Thyroid gland (tissue), 4 donors: ENCODE measurements at regions of chr2 and their contacts with region 1.

Region 1: DNA sequence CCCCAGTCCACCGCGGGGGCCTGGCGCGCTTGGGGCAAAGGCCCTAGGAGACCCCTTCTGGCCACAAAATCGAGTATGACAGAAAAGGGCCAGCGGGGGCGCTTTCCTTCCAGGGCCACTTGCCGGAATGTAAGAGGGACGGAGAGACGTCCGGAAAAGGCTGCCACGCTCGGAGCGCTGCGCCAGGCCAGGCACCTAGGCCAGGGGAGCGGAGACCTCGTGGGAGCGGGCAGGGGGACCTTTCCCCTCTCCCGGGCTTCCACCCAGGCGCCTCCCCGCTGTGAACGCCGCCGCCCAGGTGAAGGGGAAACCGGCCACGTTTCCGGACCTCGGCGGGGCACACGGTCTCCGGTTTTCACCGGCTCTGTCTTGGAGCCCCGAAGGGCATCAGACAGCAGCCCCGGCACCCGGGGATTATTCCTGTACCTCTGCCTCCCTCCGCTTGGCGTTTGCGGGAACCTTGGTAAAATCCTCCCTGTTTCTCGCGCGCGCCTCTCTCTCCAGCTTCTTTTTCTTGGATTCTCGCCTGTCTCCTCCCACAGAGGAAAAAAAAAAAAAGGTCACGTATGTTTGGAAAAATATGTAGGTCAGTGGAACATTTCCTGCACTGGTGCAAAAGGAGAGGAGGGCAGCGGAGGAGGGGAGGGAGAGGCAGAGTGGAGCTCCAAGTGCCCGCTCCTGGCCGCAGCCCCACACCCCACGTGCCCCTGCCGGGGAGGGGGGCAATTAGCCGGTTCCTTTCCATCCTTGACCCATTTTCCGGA is 1.2 kb upstream of the NPAS2 start:
- DNase-seq: peak; percentile 83 to 88
- H3K4me3 ChIP-seq: peak overlapping the region; percentile 37 to 70 (median 62)
- H3K27ac ChIP-seq: peak overlapping the region; percentile 34 to 87 (median 81)
- H3K4me1 ChIP-seq: peaks cover 8 to 14% of the 10 kb centered on the region in 2 donors
- H3K27me3 ChIP-seq: no peaks in the 10 kb centered on the region
- CTCF ChIP-seq: peak in 4 of 6 experiments; percentile 21 to 44 (median 32)
- POLR2A ChIP-seq: peak in 1 of 2 donors; percentile 51

Region 2: GRCh38 chr2:100562732-100563720 is 255.8 kb before region 1 on chr2 and contains the start of gene PDCL3:
- intact Hi-C with region 1: no loop called
- DNase-seq: peak; percentile 98 to 99
- H3K4me3 ChIP-seq: peak within 1 kb of the TSS; percentile 43 to 63 (median 47)
- H3K27ac ChIP-seq: peak within 1 kb of the TSS; percentile 92 to 98 (median 96)
- H3K4me1 ChIP-seq: peaks cover 11 to 21% of the 10 kb centered on the region in 2 donors
- H3K27me3 ChIP-seq: no peaks in the 10 kb centered on the region
- CTCF ChIP-seq: peak in 1 of 6 experiments; percentile 4
- POLR2A ChIP-seq: peak in 1 of 2 donors; percentile 82
- total RNA-seq, gene PDCL3: 6.6 to 13.3 (median 10.7) TPM

Region 3: DNA sequence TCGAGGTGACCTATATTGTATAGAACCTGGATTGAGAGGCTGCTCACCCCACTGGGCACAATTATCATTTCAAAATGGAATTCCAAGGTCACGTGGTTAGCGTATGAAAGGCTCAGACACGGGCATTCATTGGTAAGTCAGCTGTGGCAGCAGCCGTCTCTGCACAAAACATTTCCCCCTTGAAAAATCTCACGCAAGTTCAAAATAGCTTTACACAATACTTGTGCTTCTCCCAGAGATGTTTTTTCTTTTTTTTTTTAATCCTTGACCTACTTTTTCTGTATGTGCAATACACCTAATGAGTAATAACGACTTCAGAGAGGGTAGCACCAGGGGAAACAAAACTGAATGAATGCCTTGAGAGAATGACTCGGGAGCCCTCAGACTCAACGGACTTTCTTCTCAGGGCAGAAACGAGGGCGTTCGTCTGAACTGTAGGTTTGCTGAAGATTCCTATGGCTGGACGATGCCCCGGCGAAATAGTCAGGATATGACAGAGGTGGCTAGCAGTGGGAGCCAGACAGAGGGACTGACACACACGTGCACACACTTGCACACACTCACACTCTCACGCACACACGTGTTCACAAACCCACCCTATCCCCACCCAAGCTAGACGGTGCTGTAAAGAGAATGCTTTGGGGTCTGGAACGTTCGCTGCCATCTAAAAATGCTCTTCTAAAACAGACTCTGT is 178.2 kb before region 1 on chr2:
- intact Hi-C with region 1: no loop called
- DNase-seq: peak; percentile 35 to 40
- H3K4me3 ChIP-seq: no peak overlapping the region
- H3K27ac ChIP-seq: peak overlapping the region in 1 of 3 donors; percentile 11
- H3K4me1 ChIP-seq: peaks cover 15 to 16% of the 10 kb centered on the region in 2 donors
- H3K27me3 ChIP-seq: no peaks in the 10 kb centered on the region
- CTCF ChIP-seq: no peak
- POLR2A ChIP-seq: no peak

Region 4: DNA sequence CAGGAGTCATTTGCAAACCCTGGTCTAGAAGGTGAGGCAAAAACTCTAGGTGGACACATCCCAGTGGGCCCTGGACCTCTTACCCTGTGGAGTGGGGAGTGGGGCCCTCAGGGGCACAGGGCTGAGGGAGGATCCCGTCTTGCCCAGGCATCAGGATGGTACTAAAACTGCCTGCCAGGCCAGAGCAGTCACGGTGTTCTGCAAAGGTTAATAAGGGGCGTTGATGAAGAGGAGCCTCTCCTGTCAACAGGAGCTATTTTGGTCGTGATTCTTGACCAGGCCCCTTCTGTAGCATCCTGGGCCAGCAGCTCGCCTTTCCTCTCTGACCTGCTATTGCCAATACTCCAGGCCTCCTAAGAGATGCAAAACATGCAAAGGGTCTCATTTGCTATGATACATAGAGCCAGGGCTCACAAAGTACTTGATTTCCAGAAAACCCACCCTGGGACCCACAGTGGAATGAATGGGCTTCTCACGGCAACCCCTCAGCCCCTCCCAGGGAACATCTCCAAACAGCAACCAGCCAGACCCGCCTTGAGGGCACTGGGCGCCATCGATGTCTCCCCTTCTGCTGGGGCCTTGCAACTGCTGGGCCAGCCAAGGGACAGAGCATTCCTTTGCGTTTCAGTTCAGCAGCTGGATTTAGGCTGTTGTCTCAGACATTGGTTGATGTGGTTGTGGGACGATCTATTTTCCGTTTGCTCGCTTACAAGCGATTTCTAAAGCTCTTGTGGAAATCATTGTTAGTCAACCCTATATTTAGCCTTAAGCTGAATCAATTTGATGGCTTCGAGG is 144.9 kb before region 1 on chr2:
- intact Hi-C with region 1: no loop called
- DNase-seq: no peak
- H3K4me3 ChIP-seq: no peak overlapping the region
- H3K27ac ChIP-seq: no peak overlapping the region
- H3K4me1 ChIP-seq: no peaks in the 10 kb centered on the region
- H3K27me3 ChIP-seq: no peaks in the 10 kb centered on the region
- CTCF ChIP-seq: no peak
- POLR2A ChIP-seq: no peak

Region 5: DNA sequence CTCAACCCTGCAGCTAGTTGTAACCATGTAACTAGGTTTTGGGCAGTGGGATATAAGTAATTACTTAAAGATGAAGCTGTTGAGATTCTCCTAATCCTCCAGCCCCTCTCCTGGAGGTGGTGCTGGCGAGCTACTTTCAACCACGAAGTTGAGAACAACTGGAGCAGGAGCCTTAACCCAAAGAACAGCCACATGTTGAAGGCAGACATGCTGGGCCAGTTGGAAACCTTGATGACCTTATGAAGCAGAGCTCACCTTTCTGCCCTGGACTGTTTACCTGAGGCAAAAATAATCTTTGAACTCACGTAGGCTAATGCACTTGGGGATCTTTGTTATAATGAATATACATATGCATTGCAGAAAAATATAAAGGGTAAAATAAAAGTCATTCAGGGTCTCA is 88.4 kb before region 1 on chr2:
- intact Hi-C with region 1: loop called (anchors 10 kb)
- DNase-seq: peak; percentile 63 to 74
- H3K4me3 ChIP-seq: no peak overlapping the region
- H3K27ac ChIP-seq: no peak overlapping the region
- H3K4me1 ChIP-seq: no peaks in the 10 kb centered on the region
- H3K27me3 ChIP-seq: no peaks in the 10 kb centered on the region
- CTCF ChIP-seq: peak in 5 of 6 experiments; percentile 16 to 72 (median 66)
- POLR2A ChIP-seq: no peak

Region 6: DNA sequence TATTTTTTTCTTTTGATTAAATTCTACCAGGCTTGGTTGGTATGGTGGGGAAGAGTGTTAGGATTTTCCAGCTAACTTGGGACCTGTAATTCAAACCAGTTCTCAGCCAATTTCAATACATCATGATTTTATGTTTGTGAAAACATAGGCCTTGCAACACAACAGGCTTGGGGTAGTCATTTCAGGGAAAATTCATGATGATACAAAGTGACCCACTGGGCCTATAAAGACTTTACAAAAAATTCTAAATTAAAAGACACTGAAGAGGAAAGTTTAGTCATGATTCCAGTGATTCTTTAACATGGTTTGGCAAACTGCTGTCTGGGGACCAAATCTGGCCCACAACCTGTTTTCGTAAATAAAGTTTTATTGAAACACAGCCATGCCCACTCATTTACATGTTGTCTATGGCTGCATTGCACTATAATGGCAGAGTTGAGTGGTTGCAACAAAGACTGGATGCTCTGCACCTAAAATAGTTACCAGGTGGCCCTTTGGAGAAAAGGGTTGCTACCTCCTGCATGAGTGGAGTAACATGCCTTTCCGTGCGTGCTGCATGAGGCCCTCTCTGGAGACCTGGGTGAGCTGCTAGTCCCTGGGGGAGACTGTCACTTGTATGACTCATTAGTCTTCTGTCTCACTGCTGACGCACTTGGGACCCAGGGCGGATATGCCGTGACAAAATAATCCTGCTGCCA is 74.8 kb after region 1 on chr2:
- intact Hi-C with region 1: loop called (anchors 10 kb)
- DNase-seq: no peak
- H3K4me3 ChIP-seq: no peak overlapping the region
- H3K27ac ChIP-seq: no peak overlapping the region
- H3K4me1 ChIP-seq: peaks cover 19 to 20% of the 10 kb centered on the region in 2 donors
- H3K27me3 ChIP-seq: no peaks in the 10 kb centered on the region
- CTCF ChIP-seq: no peak
- POLR2A ChIP-seq: no peak